Keratinocyte (primary cell): ENCODE measurements at regions of chr10 and their contacts with region 1.

Region 1: GRCh38 chr10:60114765-60115586 is 208.6 kb upstream of the CCDC6 start:
- DNase-seq: no peak
- H3K4me3 ChIP-seq: no peak overlapping the region
- H3K27ac ChIP-seq: no peak overlapping the region
- H3K4me1 ChIP-seq: no peaks in the 10 kb centered on the region
- H3K27me3 ChIP-seq: no peaks in the 10 kb centered on the region
- CTCF ChIP-seq: peak; percentile 43 to 56 (median 56)

Region 2: DNA sequence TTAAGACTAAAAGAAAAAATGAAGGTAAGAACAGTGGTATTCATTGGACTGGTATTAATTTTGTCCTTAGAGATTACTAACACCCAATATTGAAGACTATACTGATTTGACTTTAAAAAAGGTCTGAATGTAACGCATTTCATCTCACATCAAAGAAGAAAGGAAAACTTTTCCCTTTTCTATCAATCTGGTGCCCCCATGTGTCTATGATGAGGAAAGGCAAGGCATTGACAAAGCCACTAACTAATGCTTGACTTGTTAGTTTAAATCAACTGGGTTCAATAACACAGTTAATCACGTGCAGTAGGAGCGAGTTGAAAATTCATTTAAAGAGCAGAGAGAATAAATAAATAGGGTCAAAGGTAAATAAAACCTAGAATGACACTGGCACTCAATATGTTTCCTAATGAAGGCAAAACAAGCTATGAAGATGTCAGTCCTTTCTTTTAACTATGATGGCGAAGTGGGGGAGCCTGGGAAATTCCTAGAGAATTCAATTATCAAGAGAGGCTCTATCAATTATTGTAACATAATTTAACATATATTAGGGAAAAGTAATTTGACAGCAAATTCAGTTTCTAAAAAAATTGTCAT is 93.8 kb after region 1 on chr10:
- dilution Hi-C with region 1: loop called (anchors 25 kb)
- DNase-seq: no peak
- H3K4me3 ChIP-seq: no peak overlapping the region
- H3K27ac ChIP-seq: no peak overlapping the region
- H3K4me1 ChIP-seq: no peaks in the 10 kb centered on the region
- H3K27me3 ChIP-seq: no peaks in the 10 kb centered on the region
- CTCF ChIP-seq: peak in 2 of 3 experiments; percentile 56 to 73

Region 3: DNA sequence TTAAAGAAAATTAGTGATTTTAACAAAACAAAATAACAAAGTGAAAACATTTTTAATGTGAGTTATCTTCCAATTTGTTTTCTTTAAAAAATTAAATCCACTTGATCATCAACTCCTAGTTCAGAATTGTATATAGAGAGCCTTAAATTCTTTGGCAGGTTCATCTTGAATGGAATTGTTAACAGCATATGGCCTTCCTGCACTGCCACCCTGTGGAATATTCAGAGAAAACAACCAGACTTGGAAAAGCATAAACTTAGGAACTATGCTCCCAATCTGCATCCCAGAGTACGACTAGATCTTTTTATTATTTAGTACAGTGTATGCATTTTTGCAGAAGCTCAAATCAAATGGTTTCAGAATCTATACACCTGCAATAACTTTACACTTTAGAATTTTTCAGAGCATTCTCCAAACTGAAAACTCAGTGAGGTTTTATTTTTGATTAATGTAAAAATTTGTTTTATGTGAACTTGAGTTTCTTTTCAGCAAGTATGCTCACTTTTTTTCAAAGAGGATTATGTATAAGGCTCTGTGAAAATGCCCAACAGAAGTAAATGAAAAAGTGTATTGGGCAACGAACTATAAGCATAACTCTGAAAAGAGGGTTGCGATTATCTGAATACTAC is 319.6 kb after region 1 on chr10:
- dilution Hi-C with region 1: loop called (anchors 25 kb)
- DNase-seq: peak; percentile 35
- H3K4me3 ChIP-seq: no peak overlapping the region
- H3K27ac ChIP-seq: no peak overlapping the region
- H3K4me1 ChIP-seq: peaks cover 10% of the 10 kb centered on the region
- H3K27me3 ChIP-seq: no peaks in the 10 kb centered on the region
- CTCF ChIP-seq: peak; percentile 34 to 63 (median 47)